Gastrocnemius medialis (tissue), 4 donors: ENCODE measurements at regions of chr2 and their contacts with region 1.

Region 1: GRCh38 chr2:237449193-237449881 is 35.4 kb upstream of the COL6A3 start:
- DNase-seq: peak; percentile 94 to 96
- ATAC-seq: peak; percentile 98 to 99
- H3K4me3 ChIP-seq: peak overlapping the region; percentile 12 to 52 (median 46)
- H3K27ac ChIP-seq: peak overlapping the region; percentile 90 to 99 (median 94)
- H3K4me1 ChIP-seq: peaks cover 30 to 43% of the 10 kb centered on the region in 2 donors
- H3K27me3 ChIP-seq: no peaks in the 10 kb centered on the region
- CTCF ChIP-seq: no peak
- POLR2A ChIP-seq: peak in 1 of 2 donors; percentile 76

Region 2: GRCh38 chr2:236659758-236660150 is 789.6 kb before region 1 on chr2:
- in situ Hi-C with region 1: no loop called
- intact Hi-C with region 1: no loop called
- DNase-seq: no peak
- ATAC-seq: no peak
- H3K4me3 ChIP-seq: no peak overlapping the region
- H3K27ac ChIP-seq: no peak overlapping the region
- H3K4me1 ChIP-seq: peaks cover 13 to 17% of the 10 kb centered on the region in 2 donors
- H3K27me3 ChIP-seq: no peaks in the 10 kb centered on the region
- CTCF ChIP-seq: no peak
- POLR2A ChIP-seq: no peak

Region 3: GRCh38 chr2:237421542-237422116 is 27.7 kb before region 1 on chr2:
- in situ Hi-C with region 1: no loop called
- intact Hi-C with region 1: loop called (anchors 2 kb)
- DNase-seq: peak; percentile 74 to 83
- ATAC-seq: peak; percentile 97 to 98
- H3K4me3 ChIP-seq: peak overlapping the region; percentile 19 to 26 (median 20)
- H3K27ac ChIP-seq: peak overlapping the region; percentile 62 to 80 (median 72)
- H3K4me1 ChIP-seq: peaks cover 7 to 16% of the 10 kb centered on the region in 2 donors
- H3K27me3 ChIP-seq: no peaks in the 10 kb centered on the region
- CTCF ChIP-seq: peak; percentile 81 to 91 (median 88)
- POLR2A ChIP-seq: peak in 1 of 2 donors; percentile 18